ENCODE measurements at regions of chr12 and their contacts with region 1.

Region 1: DNA sequence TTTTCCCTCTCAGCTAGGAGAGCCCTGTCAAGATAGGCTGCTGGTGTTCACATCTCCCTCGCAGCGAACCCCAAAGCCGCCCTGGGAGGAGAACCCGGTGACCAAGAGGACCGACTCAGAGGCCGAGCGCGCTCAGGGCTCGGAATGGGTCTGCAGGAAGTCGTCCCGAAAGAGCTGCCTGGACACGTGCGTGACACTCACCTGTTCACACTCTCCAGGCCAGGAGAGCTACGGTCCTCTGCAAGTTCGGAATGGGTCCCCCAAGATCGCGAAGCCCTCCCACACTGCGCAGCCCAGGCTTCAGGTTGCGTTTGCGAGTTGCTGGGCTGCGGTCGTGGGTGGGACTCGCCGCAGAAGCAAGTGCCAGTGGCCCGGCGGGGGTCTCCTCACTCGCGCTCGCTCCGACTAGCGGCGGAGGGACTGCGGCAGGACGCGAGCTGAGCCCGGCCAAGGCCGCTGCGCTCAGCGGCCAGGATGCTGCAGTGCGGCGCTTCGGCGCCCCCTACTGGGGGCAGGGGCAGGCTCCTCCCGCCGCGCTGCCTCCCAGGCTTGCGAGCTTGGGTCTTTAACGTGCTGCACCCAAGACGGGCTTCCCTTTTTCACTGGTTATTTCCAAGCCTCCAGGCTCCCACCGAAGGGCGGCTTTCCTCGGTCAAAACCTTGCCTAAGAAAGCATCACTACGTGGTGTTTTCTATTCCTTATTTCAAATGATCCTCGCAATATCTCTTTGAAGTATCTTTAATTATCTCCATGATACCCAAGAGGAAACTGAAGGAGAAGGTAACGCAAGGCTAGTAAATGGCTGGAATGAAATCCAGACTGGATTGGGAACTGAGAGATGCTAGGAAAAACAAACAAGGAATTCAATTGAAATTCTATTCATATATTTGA is at the start of gene RERG:
- DNase-seq: peak; percentile 57 to 78
- ATAC-seq: peak; percentile 100
- H3K4me3 ChIP-seq: peak within 1 kb of the TSS; percentile 47
- H3K27ac ChIP-seq: peak within 1 kb of the TSS; percentile 60 to 71
- H3K4me1 ChIP-seq: 0 out of 3 replicates have a peak, but pooled peaks cover 6% of the 10 kb centered on the region
- CTCF ChIP-seq: peak; percentile 96
- EP300 ChIP-seq: no peak
- POLR2A ChIP-seq: no peak
- RAD21 ChIP-seq: peak; percentile 87 to 98
- polyA plus RNA-seq, gene RERG: 0.44 and 0.48 TPM in 2 replicates

Region 2: DNA sequence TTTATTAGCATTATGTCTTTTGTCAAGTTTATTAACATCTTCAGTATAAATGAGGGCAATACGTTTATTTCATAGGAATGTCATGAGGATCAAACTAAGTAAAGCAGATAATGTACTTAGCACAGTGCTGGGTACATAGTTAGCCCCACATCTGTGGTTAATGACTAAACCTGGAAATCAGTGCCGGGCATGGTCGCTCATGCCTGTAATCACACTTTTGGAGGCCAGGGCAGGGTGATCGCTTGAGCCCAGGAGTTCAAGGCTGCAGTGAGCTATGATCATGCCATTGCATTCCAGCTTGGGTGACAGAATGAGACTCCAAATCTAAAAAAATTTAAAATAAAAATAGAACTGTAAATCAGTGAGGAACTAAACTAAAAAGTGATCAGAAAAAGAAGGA is 480.1 kb before region 1 on chr12:
- CTCF ChIA-PET with region 1: no interaction called
- POLR2A ChIA-PET with region 1: no interaction called
- DNase-seq: no peak
- ATAC-seq: no peak
- H3K4me3 ChIP-seq: no peak overlapping the region
- H3K27ac ChIP-seq: no peak overlapping the region
- H3K4me1 ChIP-seq: no peaks in the 10 kb centered on the region
- CTCF ChIP-seq: no peak
- EP300 ChIP-seq: no peak
- POLR2A ChIP-seq: no peak
- RAD21 ChIP-seq: no peak

Region 3: GRCh38 chr12:14810953-14811483 is 410.2 kb before region 1 on chr12:
- CTCF ChIA-PET with region 1: interaction called, 22 read pairs
- POLR2A ChIA-PET with region 1: no interaction called
- DNase-seq: peak; percentile 38 to 58
- ATAC-seq: peak; percentile 95 to 97
- H3K4me3 ChIP-seq: no peak overlapping the region
- H3K27ac ChIP-seq: no peak overlapping the region
- H3K4me1 ChIP-seq: peaks cover 14% of the 10 kb centered on the region; the same call in 1 of the 3 replicates
- CTCF ChIP-seq: peak; percentile 89
- EP300 ChIP-seq: no peak
- POLR2A ChIP-seq: no peak
- RAD21 ChIP-seq: peak; percentile 94 to 95

Region 4: DNA sequence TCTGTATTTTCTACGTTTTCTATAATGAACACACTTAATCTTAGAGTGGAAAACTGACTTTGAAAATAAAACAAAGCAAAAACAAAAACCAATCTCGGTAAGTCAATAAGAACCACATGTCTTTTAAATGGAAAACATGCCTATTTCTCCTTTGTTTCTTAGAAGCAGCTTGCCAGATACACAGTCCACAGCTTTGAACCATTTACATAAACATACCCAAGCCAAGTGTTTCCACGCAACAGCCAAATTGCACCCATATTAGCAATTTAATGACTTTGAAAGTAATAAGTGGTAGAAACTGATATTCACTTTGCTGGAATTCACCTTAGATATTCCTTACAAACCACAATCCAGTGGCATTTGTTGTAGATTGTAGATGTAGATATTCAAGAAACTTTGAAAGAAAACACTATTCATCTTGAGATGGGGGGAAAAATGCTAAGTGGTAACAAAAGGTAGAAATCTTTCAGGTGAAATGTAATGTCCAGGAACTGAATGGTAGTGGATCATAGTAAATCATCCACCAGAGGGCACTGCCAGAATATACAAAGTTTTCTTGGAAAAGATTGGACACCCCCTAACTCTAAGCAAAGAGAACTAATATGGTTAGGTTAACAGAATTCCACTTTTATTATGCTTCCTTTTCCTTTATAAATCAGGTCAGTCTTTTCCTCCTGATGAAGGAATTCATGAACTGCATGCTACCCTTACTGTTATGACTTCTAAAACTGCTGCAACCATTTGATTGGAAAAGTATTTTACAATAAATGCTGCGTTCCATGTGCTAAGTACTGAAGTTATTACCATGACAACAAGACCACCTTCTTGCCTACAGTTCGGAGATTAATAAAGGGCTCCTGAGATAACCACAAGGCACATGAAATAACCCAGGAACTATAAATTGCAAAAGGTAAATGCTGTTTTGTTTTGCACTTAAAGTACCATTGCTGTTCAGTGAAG is 69.8 kb before region 1 on chr12:
- CTCF ChIA-PET with region 1: interaction called, 141 read pairs
- POLR2A ChIA-PET with region 1: no interaction called
- DNase-seq: peak in 1 of 2 experiments; percentile 32
- ATAC-seq: peak; percentile 84 to 85
- H3K4me3 ChIP-seq: no peak overlapping the region
- H3K27ac ChIP-seq: no peak overlapping the region
- H3K4me1 ChIP-seq: peaks cover 21% of the 10 kb centered on the region
- CTCF ChIP-seq: peak; percentile 84
- EP300 ChIP-seq: no peak
- POLR2A ChIP-seq: no peak
- RAD21 ChIP-seq: peak; percentile 78 to 80

Region 5: DNA sequence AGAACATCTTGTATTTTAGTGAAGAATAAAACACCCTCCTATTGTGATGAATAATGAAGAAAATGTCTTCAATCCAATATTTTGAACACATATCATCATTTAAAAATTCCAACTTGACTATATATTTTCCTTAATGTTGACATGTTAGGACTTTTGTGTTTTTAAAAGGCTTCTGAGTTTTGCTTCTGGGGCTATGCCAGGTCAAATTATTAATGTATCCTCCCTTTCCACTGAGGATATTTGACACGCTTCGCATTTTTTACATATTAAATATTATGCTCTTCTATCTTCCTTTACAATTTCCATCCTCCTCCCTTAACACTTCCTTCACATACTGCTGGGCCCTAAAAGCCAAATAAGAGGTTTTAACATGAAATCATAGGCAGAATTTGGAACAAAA is 20.6 kb before region 1 on chr12:
- CTCF ChIA-PET with region 1: interaction called, 31 read pairs
- POLR2A ChIA-PET with region 1: no interaction called
- DNase-seq: no peak
- ATAC-seq: no peak
- H3K4me3 ChIP-seq: no peak overlapping the region
- H3K27ac ChIP-seq: no peak overlapping the region
- H3K4me1 ChIP-seq: no peaks in the 10 kb centered on the region
- CTCF ChIP-seq: no peak
- EP300 ChIP-seq: no peak
- POLR2A ChIP-seq: no peak
- RAD21 ChIP-seq: no peak

Region 6: GRCh38 chr12:15268927-15269552 is 47.8 kb after region 1 on chr12:
- CTCF ChIA-PET with region 1: interaction called, 12 read pairs
- POLR2A ChIA-PET with region 1: no interaction called
- DNase-seq: peak; percentile 62 to 82
- ATAC-seq: peak; percentile 74 to 86
- H3K4me3 ChIP-seq: no peak overlapping the region
- H3K27ac ChIP-seq: no peak overlapping the region
- H3K4me1 ChIP-seq: peaks cover 2% of the 10 kb centered on the region; the same call in 1 of the 3 replicates
- CTCF ChIP-seq: peak; percentile 89
- EP300 ChIP-seq: no peak
- POLR2A ChIP-seq: no peak
- RAD21 ChIP-seq: peak; percentile 85 to 90

Region 7: DNA sequence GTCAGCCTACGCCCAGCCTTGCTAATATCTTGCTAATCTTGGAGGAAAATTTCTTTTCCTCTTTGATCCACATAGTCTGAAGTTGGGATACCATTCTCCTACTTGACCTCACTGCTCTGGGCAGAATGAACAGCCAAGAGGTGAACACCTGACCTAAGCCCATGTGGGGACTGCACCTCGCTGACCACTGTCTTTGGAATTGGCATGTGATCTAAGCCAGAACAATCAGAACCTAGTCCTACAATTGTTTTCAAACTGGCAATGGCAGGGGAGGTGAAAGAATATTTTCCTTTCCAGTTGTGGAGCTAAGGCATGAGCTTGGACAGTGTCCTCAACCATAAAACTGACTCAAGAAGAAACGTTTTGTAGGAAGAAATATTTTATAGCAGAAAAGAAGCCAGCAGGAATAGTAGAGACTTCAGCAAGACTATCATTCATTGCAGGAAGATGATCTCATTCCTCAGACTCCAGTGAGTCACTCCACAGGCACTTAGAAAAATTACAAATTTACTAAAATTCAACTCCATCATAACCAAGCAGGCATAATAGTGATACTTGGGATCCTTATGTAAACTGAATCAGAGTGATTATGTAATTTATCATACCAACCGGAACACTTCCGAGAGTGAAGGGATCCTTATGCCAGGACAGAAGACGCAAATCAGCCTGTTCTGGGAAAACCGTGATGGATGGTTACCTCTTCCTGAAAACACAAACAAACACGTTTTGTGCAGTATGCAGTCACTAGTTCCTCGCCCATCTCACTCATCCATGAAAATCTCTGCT is 115.7 kb after region 1 on chr12:
- CTCF ChIA-PET with region 1: no interaction called
- POLR2A ChIA-PET with region 1: no interaction called
- DNase-seq: peak in 1 of 2 experiments; percentile 30
- ATAC-seq: peak; percentile 76 to 88
- H3K4me3 ChIP-seq: no peak overlapping the region
- H3K27ac ChIP-seq: peak overlapping the region; percentile 24 to 58; a peak in 5 of 6 replicates
- H3K4me1 ChIP-seq: peaks cover 14% of the 10 kb centered on the region
- CTCF ChIP-seq: no peak
- EP300 ChIP-seq: no peak
- POLR2A ChIP-seq: no peak
- RAD21 ChIP-seq: no peak

Measured in A549 (cell line).